Activated CD8-positive, alpha-beta memory T cell treated with anti-CD3 and anti-CD28 coated beads, Interleukin-2, amount 10 ng/mL, durations not matched to agents 7 days and 5 days (primary cell): ENCODE measurements at regions of chr12 and their contacts with region 1.

Region 1: GRCh38 chr12:111673503-111673902 is 12.3 kb downstream of the BRAP start:
- DNase-seq: no peak
- ATAC-seq: no peak
- H3K4me3 Mint-ChIP-seq: no peak overlapping the region
- H3K27ac Mint-ChIP-seq: no peak overlapping the region
- H3K4me1 Mint-ChIP-seq: no peaks in the 10 kb centered on the region
- H3K27me3 Mint-ChIP-seq: no peaks in the 10 kb centered on the region

Region 2: DNA sequence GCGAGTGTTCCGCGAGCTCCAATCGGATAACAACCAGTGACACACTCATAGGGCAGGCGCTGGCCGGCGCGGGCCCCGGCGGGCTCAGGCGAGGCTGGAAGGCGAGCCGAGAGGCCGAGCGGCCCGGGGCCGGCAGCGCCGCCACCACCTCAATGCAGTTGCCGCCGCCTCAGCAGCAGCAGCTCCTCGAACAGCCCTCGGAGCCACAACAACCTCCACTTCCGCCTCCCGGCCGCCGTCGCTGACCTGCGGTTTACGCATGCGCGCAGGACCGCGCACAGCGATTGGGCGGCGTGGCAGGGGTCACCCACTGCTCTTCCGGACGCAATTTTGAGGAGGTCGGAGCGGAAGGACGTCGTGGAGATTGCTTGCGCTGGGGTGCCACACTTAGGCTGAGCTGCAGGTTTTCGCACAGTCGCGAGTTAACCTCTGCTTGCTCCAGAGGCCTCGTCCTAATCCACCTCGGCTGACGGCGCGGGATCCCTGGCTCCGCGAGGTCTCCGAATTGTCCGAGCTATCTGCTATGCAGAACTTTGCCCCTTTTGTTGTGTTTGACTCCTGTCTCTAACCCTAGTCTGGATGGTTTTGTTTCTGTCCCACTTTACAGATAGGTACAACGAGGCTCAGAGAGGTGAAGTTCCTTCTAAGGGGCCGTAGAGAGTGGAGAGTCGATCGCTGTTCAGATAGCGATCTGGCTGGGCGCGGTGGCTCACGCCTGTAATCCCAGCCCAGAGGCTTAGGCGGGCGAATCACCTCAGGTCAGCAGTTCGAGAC is 12.4 kb after region 1 on chr12 and contains the starts of genes ACAD10 and BRAP:
- CTCF ChIA-PET with region 1: interaction called, 10 read pairs
- DNase-seq: peak; percentile 96
- ATAC-seq: peak; percentile 97
- H3K4me3 Mint-ChIP-seq: peak within 1 kb of the TSS; percentile 96
- H3K27ac Mint-ChIP-seq: peak within 1 kb of the TSS; percentile 91
- H3K4me1 Mint-ChIP-seq: peaks cover 35% of the 10 kb centered on the region
- H3K27me3 Mint-ChIP-seq: no peaks in the 10 kb centered on the region
- total RNA-seq, gene ACAD10: 24.7 to 30.3 TPM
- total RNA-seq, gene BRAP: 20.3 to 22.3 TPM

Region 3: GRCh38 chr12:111728795-111729194 is 55.3 kb after region 1 on chr12:
- CTCF ChIA-PET with region 1: no interaction called
- DNase-seq: no peak
- ATAC-seq: no peak
- H3K4me3 Mint-ChIP-seq: no peak overlapping the region
- H3K27ac Mint-ChIP-seq: no peak overlapping the region
- H3K4me1 Mint-ChIP-seq: no peaks in the 10 kb centered on the region
- H3K27me3 Mint-ChIP-seq: no peaks in the 10 kb centered on the region